Activated CD8-positive, alpha-beta T cell treated with anti-CD3 and anti-CD28 coated beads, Interleukin-2, amount 10 ng/mL, durations not matched to agents 7 days and 5 days (primary cell): ENCODE measurements at regions of chr9 and their contacts with region 1.

Region 1: DNA sequence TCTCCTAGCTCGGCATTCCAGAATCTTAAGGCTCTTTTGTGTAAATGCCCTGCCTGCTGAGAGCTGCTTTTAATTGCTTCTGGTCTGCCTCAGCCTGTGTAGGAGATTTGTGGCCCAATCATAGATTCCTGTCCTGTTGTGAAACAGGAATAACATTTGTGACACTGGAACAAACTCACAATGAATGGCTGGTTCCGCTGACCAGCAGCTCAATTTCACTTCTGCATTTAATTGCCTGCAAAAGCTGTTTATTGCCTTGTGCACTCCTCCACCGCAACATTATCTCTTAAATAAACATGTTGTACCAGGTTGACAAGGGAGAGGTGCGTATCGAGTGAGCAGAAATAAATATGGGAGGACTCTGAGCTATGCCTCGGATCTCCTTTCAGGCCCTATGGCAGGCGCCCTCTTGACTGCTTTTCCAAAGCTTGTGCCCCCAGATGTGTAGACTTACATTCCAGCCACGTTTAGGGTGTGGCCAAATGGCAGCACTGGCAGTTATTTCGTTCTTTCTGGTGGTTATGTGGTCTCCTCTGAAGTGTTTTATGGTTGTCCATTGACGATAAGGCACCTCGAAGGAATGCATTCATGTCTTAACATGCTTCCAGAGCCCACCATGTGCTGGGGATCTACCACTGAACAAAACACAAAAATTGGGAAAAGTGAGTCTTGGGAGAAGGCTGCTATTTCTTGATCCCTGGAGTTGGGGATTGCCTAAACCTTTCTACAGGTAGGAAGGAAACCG is 58.1 kb downstream of the DMRT1 start:
- DNase-seq: no peak
- ATAC-seq: no peak
- H3K4me3 Mint-ChIP-seq: no peak overlapping the region
- H3K27ac Mint-ChIP-seq: no peak overlapping the region
- H3K4me1 Mint-ChIP-seq: peaks cover 8% of the 10 kb centered on the region
- H3K27me3 Mint-ChIP-seq: peaks cover 29% of the 10 kb centered on the region

Region 2: GRCh38 chr9:911003-911402 is 11.4 kb after region 1 on chr9:
- CTCF ChIA-PET with region 1: no interaction called
- POLR2A ChIA-PET with region 1: no interaction called
- DNase-seq: no peak
- ATAC-seq: no peak
- H3K4me3 Mint-ChIP-seq: no peak overlapping the region
- H3K27ac Mint-ChIP-seq: no peak overlapping the region
- H3K4me1 Mint-ChIP-seq: no peaks in the 10 kb centered on the region
- H3K27me3 Mint-ChIP-seq: peaks cover 31% of the 10 kb centered on the region

Region 3: DNA sequence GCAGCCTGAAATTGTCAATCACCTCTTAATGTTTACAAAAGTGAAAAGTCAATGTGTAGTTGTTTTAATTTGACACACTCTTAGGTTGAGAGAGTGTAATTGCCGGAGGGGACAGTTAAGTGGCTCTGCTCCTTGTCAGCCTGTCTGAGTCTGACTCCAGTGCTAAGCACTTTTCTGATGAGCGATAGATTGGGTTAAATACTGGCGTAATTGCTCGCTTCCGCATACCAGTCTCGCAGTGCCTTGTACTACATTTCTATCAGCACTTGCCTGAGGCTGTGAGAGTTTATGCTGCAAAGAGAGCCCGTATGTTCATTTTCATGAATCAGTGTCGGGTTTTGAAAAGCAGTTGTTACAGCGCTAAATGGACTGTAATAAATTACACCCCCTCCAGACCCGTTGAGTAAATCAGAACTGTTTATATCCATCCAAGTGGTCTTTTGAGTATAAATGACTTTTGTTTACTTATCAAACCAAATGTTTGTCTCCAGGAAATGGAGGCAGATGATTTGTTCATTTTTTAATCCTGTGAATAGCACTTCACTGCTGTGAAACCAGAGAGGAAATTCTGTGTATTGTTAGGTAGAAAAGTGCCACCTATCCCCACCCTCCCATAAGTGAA is 35.8 kb after region 1 on chr9:
- CTCF ChIA-PET with region 1: no interaction called
- POLR2A ChIA-PET with region 1: no interaction called
- DNase-seq: no peak
- ATAC-seq: no peak
- H3K4me3 Mint-ChIP-seq: no peak overlapping the region
- H3K27ac Mint-ChIP-seq: no peak overlapping the region
- H3K4me1 Mint-ChIP-seq: no peaks in the 10 kb centered on the region
- H3K27me3 Mint-ChIP-seq: peaks cover 31% of the 10 kb centered on the region

Region 4: DNA sequence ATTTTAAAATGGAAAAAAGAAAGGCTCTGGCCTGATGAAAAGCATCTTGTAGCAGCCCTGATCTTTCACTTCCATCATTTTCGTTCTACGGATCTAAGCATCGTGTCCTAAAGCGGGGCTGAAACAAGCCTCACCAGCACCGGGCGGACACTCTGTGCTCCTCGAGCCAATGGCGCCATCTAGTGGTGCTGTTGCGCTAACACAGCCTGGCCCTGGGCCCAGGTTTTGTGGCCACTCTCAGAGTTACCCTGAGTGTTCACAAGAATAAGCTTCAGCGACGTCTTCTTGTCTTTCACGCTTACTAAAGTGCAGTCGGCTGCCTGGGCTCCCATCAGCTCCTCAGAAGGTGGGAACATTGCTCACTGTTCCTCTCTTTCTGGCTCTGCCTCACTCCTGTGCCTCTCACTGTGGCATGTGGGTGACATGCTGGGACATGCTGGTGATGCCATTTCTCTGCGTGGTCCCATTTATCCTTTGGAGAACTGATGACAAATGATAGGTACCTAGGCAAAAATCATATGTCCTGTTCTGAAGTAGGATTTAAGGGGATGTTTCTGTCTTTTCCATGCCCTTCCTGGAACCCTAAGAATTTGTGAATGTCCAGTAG is 109.6 kb after region 1 on chr9:
- CTCF ChIA-PET with region 1: interaction called, 52 read pairs
- POLR2A ChIA-PET with region 1: no interaction called
- DNase-seq: peak; percentile 82
- ATAC-seq: peak; percentile 94
- H3K4me3 Mint-ChIP-seq: no peak overlapping the region
- H3K27ac Mint-ChIP-seq: no peak overlapping the region
- H3K4me1 Mint-ChIP-seq: peaks cover 14% of the 10 kb centered on the region
- H3K27me3 Mint-ChIP-seq: peaks cover 10% of the 10 kb centered on the region